Calu3 (cell line): ENCODE measurements at regions of chr10 and their contacts with region 1.

Region 1: GRCh38 chr10:90288391-90288933 is 569.4 kb downstream of the HTR7 start:
- DNase-seq: peak; percentile 1
- H3K4me3 Mint-ChIP-seq: no peak overlapping the region
- H3K27ac Mint-ChIP-seq: peak overlapping the region; percentile 32
- H3K4me1 Mint-ChIP-seq: peaks cover 9% of the 10 kb centered on the region
- H3K27me3 Mint-ChIP-seq: no peaks in the 10 kb centered on the region
- CTCF ChIP-seq: no peak

Region 2: GRCh38 chr10:90096196-90096595 is 192.3 kb before region 1 on chr10:
- CTCF ChIA-PET with region 1: no interaction called
- intact Hi-C with region 1: no loop called
- DNase-seq: no peak
- H3K4me3 Mint-ChIP-seq: no peak overlapping the region
- H3K27ac Mint-ChIP-seq: no peak overlapping the region
- H3K4me1 Mint-ChIP-seq: no peaks in the 10 kb centered on the region
- H3K27me3 Mint-ChIP-seq: no peaks in the 10 kb centered on the region
- CTCF ChIP-seq: no peak

Region 3: GRCh38 chr10:90111671-90112070 is 176.8 kb before region 1 on chr10:
- CTCF ChIA-PET with region 1: no interaction called
- intact Hi-C with region 1: no loop called
- DNase-seq: no peak
- H3K4me3 Mint-ChIP-seq: no peak overlapping the region
- H3K27ac Mint-ChIP-seq: no peak overlapping the region
- H3K4me1 Mint-ChIP-seq: no peaks in the 10 kb centered on the region
- H3K27me3 Mint-ChIP-seq: no peaks in the 10 kb centered on the region
- CTCF ChIP-seq: no peak

Region 4: DNA sequence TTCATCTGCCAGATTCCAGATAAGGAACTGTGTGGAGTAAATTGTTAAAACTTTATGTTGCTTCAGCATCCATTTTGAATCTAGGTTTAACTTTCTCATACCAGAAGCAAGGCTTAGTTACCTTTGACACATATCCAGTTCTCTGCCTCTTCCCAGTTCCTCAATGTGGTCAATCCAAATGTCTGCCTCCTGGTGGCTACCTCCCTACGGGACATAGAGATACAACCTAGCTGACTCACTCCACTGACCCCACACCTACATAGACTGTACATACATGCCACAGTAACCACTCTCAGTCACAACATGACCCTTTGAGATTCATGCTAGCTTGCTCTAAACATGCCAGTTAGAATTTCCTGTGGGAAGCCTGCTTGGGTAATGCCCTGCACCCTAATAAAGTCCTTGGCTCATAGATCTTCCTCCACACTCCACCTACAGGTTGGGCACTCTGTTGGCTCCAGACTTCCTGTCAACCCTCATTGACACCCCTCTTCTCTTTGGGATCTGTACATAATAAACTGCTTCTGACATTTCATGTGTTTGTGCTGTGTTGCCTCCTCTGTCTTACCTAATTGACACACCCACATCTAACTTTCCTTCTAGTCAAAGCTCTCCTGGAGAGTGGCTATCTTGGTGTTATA is 291.3 kb after region 1 on chr10:
- CTCF ChIA-PET with region 1: no interaction called
- intact Hi-C with region 1: loop called (anchors 10 kb)
- DNase-seq: peak; percentile 5
- H3K4me3 Mint-ChIP-seq: no peak overlapping the region
- H3K27ac Mint-ChIP-seq: no peak overlapping the region
- H3K4me1 Mint-ChIP-seq: peaks cover 11% of the 10 kb centered on the region
- H3K27me3 Mint-ChIP-seq: no peaks in the 10 kb centered on the region
- CTCF ChIP-seq: no peak